GM12878 (cell line): ENCODE measurements at regions of chr2 and their contacts with region 1.

Region 1: DNA sequence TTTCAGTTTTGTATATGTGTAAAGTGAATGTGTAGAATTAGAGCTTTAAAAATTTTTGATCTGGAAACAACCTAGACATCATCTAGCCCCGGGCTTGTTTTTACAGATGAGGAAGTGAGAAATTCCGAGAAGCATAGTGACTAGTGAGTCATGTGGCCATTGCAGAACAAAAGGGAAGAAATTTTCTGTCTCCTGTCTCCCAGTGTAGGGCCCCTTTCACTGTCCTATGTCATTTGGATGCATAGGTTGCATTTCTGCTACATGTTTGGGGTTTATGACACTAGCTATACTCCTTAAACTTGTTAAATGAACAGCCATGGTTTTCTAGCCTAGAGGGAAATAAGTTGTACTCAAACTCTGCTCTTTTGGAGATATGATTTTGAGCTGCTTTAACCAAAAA is 84.6 kb downstream of the PLCL1 start:
- DNase-seq: peak; percentile 77
- ATAC-seq: peak; percentile 98
- H3K4me3 ChIP-seq: no peak overlapping the region
- H3K27ac ChIP-seq: peak overlapping the region; percentile 27; the same call in 1 of the 2 replicates
- H3K4me1 ChIP-seq: peaks cover 4% of the 10 kb centered on the region
- H3K27me3 ChIP-seq: no peaks in the 10 kb centered on the region
- CTCF ChIP-seq: no peak
- EP300 ChIP-seq: peak; percentile 37 to 83; a peak in 2 of 4 replicates
- POLR2A ChIP-seq: no peak
- RAD21 ChIP-seq: no peak

Region 2: GRCh38 chr2:197838036-197838435 is 51.0 kb before region 1 on chr2:
- CTCF ChIA-PET with region 1: no interaction called
- POLR2A ChIA-PET with region 1: interaction called, 3 read pairs
- RAD21 ChIA-PET with region 1: interaction called, 16 read pairs
- SMC1A ChIA-PET with region 1: no interaction called
- in situ Hi-C with region 1: no loop called
- intact Hi-C with region 1: no loop called
- DNase-seq: peak; percentile 30
- ATAC-seq: peak; percentile 97
- H3K4me3 ChIP-seq: no peak overlapping the region
- H3K27ac ChIP-seq: no peak overlapping the region
- H3K4me1 ChIP-seq: no peaks in the 10 kb centered on the region
- H3K27me3 ChIP-seq: no peaks in the 10 kb centered on the region
- CTCF ChIP-seq: no peak
- EP300 ChIP-seq: no peak
- POLR2A ChIP-seq: no peak
- RAD21 ChIP-seq: no peak

Region 3: DNA sequence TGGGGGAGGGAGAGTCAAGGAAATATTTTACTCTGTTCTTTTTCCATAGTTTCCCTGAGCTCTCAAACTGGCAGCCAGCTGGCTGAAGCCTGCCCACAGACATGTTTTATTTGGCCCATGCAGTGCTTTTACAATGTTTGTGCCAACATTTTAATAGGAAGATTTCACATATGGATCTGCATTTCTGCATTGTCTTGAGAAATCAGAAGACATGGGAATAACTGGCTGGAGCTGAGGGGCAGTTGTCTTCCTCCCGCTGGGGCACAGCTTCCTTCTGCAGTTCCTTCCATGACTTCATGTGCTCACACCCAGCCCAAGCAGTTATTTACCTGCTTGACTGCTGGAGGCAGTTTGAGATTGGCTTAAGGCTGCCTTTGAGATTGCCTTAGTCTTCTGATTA is 10.2 kb before region 1 on chr2:
- CTCF ChIA-PET with region 1: interaction called, 3 read pairs
- POLR2A ChIA-PET with region 1: interaction called, 5 read pairs
- RAD21 ChIA-PET with region 1: interaction called, 4 read pairs
- SMC1A ChIA-PET with region 1: interaction called, 18 read pairs
- in situ Hi-C with region 1: no loop called
- intact Hi-C with region 1: no loop called
- DNase-seq: no peak
- ATAC-seq: no peak
- H3K4me3 ChIP-seq: no peak overlapping the region
- H3K27ac ChIP-seq: no peak overlapping the region
- H3K4me1 ChIP-seq: no peaks in the 10 kb centered on the region
- H3K27me3 ChIP-seq: no peaks in the 10 kb centered on the region
- CTCF ChIP-seq: no peak
- EP300 ChIP-seq: no peak
- POLR2A ChIP-seq: no peak
- RAD21 ChIP-seq: no peak

Region 4: GRCh38 chr2:197911667-197912066 is 22.6 kb after region 1 on chr2:
- CTCF ChIA-PET with region 1: no interaction called
- POLR2A ChIA-PET with region 1: interaction called, 3 read pairs
- RAD21 ChIA-PET with region 1: interaction called, 5 read pairs
- SMC1A ChIA-PET with region 1: interaction called, 10 read pairs
- in situ Hi-C with region 1: no loop called
- intact Hi-C with region 1: no loop called
- DNase-seq: no peak
- ATAC-seq: no peak
- H3K4me3 ChIP-seq: no peak overlapping the region
- H3K27ac ChIP-seq: no peak overlapping the region
- H3K4me1 ChIP-seq: no peaks in the 10 kb centered on the region
- H3K27me3 ChIP-seq: no peaks in the 10 kb centered on the region
- CTCF ChIP-seq: no peak
- EP300 ChIP-seq: no peak
- POLR2A ChIP-seq: no peak
- RAD21 ChIP-seq: no peak

Region 5: DNA sequence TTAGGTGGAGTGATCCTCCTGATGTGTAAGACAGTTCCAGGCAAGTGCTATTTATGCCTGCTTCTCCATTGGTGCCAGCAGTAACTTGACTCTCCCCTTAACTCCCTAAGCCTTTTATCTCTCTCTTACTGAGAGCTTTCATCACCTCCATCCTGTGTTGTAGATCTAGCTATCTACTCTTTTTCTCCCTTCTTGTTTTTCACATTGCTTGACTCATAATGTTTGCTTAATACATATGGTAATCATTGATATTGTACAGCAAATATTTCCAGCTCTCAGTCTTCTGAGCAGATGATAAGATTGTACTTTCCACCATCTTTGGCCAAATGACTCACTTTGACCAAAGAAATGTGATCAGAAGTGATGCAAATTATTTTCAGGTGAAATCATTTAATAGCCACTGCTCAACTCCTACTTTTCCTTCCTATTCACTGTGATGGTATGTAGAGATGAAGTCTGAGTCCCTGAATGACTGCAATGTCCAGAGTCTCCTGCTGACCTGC is 80.4 kb after region 1 on chr2:
- CTCF ChIA-PET with region 1: no interaction called
- POLR2A ChIA-PET with region 1: no interaction called
- RAD21 ChIA-PET with region 1: no interaction called
- SMC1A ChIA-PET with region 1: no interaction called
- in situ Hi-C with region 1: no loop called
- intact Hi-C with region 1: no loop called
- DNase-seq: no peak
- ATAC-seq: no peak
- H3K4me3 ChIP-seq: no peak overlapping the region
- H3K27ac ChIP-seq: no peak overlapping the region
- H3K4me1 ChIP-seq: no peaks in the 10 kb centered on the region
- H3K27me3 ChIP-seq: no peaks in the 10 kb centered on the region
- CTCF ChIP-seq: no peak
- EP300 ChIP-seq: no peak
- POLR2A ChIP-seq: no peak
- RAD21 ChIP-seq: no peak

Region 6: DNA sequence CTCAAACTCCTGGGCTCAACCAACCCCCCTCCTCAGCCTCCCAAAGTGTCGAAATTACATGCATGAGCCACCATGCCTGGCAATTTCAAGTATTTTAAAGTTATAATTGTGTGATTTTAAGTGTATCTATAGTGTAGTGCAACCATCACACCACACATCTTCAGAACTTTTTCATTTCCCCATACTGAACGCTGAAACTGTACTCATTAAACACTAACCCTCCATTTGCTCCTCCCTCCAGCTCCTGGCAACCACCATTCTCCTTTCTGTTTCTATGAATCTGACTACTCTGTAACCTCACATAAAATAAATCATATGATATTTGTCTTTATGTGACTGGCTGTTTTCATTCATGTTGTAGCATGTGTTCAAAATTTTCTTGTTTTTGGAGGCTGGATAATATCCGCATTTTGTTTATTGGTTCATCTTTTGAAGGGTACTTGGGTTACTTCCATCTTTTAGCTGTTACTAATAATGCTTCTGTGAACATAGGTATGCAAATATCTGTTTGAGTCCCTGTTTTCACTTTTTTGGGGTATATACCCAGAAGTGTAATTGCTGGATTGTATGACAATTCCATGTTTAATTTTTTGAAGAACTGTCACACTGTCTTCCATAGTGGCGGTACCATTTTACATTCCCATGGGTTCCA is 103.6 kb after region 1 on chr2:
- CTCF ChIA-PET with region 1: interaction called, 4 read pairs
- POLR2A ChIA-PET with region 1: interaction called, 3 read pairs
- RAD21 ChIA-PET with region 1: interaction called, 9 read pairs
- SMC1A ChIA-PET with region 1: interaction called, 21 read pairs
- in situ Hi-C with region 1: no loop called
- intact Hi-C with region 1: no loop called
- DNase-seq: no peak
- ATAC-seq: peak; percentile 98
- H3K4me3 ChIP-seq: no peak overlapping the region
- H3K27ac ChIP-seq: peak overlapping the region; percentile 43; the same call in 1 of the 2 replicates
- H3K4me1 ChIP-seq: peaks cover 16% of the 10 kb centered on the region
- H3K27me3 ChIP-seq: no peaks in the 10 kb centered on the region
- CTCF ChIP-seq: no peak
- EP300 ChIP-seq: 0 out of 4 replicates have a peak, but pooled peaks of 1 of the 2 experiments have one; percentile 9
- POLR2A ChIP-seq: no peak
- RAD21 ChIP-seq: no peak

Region 7: GRCh38 chr2:198042189-198042588 is 153.1 kb after region 1 on chr2:
- CTCF ChIA-PET with region 1: no interaction called
- POLR2A ChIA-PET with region 1: interaction called, 3 read pairs
- RAD21 ChIA-PET with region 1: interaction called, 3 read pairs
- SMC1A ChIA-PET with region 1: interaction called, 5 read pairs
- in situ Hi-C with region 1: no loop called
- intact Hi-C with region 1: loop called (anchors 1 kb)
- DNase-seq: no peak
- ATAC-seq: peak; percentile 71
- H3K4me3 ChIP-seq: no peak overlapping the region
- H3K27ac ChIP-seq: peak overlapping the region; percentile 14; the same call in 1 of the 2 replicates
- H3K4me1 ChIP-seq: no peaks in the 10 kb centered on the region
- H3K27me3 ChIP-seq: no peaks in the 10 kb centered on the region
- CTCF ChIP-seq: no peak
- EP300 ChIP-seq: peak in 1 of 2 experiments; percentile 35; a peak in 1 of 4 replicates
- POLR2A ChIP-seq: no peak
- RAD21 ChIP-seq: no peak